Activated CD4-positive, alpha-beta memory T cell treated with anti-CD3 and anti-CD28 coated beads for 36 hours (primary cell): ENCODE measurements at regions of chr2 and their contacts with region 1.

Region 1: DNA sequence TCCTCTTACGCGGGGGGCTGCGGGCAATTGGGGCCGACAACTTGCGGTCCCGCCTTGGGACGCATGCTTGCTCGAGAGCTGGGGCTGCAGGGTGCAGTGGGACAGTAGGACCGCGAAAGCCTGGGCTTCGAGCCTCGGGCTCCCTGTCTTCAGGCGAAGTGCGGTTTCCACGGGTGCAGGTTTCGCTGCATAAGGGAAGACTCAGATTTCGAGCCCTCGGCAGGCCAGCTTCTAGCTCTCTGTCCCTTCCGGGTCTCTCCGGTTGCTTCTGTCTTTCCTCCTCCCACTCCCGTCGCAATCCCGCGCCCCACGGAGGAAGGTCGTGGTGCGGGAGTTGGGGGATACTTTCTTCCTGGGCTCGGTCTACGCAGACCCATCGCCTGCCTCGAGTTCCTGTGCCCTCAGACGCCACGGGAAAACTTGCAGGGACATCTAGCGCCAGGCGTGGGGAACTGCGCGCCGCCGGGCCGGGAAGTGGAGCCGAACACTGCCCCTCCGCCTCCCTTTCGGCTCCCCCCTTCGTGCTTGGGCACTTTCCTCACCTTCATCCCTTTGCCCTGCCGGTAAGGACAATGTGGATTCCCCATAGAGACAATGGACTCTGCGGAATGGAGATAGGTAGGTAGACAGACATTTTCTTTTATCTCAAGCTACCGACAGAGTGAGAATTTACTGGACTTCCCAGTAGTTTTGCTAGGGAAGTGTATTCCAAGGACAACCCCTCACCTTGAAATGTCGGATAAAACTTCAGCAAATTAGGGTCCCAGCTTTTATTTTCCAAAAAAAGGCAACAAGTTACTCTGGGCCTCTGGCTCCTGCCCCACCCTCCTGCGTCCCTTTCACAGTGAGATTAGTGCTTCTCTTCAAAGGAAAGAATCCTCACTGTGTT is 4.2 kb upstream of the HOXD13 start:
- DNase-seq: peak; percentile 46
- H3K4me3 Mint-ChIP-seq: peak overlapping the region; percentile 53
- H3K27ac Mint-ChIP-seq: no peak overlapping the region
- H3K4me1 Mint-ChIP-seq: peaks cover 12% of the 10 kb centered on the region
- H3K27me3 Mint-ChIP-seq: peaks cover 85% of the 10 kb centered on the region

Region 2: DNA sequence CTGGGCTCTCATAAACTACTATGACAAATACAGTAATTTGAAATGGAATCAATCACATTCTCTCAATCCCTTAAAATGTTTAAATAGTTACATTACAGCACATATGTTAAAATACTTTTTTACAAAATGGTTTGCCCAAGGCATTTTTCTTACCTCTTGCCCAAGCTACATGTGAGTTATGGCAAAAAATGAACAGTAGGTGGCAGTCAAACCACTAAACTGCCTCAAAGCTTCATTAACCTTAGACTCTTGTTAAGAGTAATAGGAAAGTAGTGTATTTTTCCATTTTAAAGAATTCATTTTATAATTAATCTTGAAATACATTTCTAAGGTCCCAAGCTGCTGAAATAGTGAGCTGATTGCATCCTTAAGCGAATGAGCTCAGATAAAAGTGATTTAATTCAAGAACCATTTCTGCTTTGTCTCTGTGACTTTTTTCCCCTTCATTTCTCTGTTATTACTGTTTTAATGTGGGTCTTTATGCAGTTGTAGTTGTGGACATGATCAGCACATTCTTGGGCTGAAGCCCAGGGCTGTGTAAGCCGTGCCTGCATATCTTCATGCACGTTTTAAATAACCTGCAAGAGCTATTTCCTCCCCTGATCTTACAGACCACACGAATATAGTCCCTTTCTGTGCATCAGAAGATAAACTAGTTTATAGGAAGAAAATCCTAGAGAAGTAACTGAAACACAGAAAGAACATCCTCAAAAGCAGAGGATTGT is 398.0 kb before region 1 on chr2:
- CTCF ChIA-PET with region 1: interaction called, 7 read pairs
- POLR2A ChIA-PET with region 1: no interaction called
- intact Hi-C with region 1: loop called (anchors 2 kb)
- DNase-seq: no peak
- H3K4me3 Mint-ChIP-seq: no peak overlapping the region
- H3K27ac Mint-ChIP-seq: no peak overlapping the region
- H3K4me1 Mint-ChIP-seq: no peaks in the 10 kb centered on the region
- H3K27me3 Mint-ChIP-seq: peaks cover 14% of the 10 kb centered on the region

Region 3: DNA sequence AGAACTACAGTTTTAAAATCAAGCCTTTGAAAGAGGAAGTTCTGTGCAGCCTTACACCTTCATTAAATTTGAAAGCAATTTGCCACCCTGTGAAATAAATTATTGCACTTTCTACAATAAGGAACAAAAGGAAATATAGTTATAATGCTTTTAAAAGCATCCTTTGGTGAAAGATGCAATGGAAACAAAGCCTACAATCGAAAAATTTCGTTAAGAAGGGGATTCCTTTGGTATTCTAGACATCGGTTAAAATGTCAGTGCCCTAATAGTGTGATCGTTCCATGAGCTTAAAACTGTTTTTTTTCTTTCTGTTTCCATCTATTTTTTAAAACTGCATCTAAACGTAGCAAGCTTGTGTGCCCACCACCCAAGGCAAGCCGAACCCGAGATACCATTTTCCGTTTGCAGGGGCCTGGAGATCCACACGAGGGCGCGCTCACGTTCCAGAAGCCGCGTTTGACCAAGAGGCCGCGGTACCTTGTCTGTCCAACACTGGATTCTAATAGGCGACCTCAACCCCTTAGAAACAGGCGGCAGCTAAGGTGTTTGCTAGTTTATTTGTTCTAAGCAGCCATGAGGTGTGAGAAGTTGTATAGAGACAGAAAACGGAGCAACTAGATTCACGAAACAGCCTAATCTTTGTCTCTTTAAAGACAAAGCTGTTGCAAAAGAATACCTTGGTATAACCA is 22.8 kb after region 1 on chr2:
- CTCF ChIA-PET with region 1: no interaction called
- POLR2A ChIA-PET with region 1: no interaction called
- intact Hi-C with region 1: loop called (anchors 2 kb)
- DNase-seq: peak; percentile 49
- H3K4me3 Mint-ChIP-seq: peak overlapping the region; percentile 8
- H3K27ac Mint-ChIP-seq: no peak overlapping the region
- H3K4me1 Mint-ChIP-seq: peaks cover 14% of the 10 kb centered on the region
- H3K27me3 Mint-ChIP-seq: peaks cover 80% of the 10 kb centered on the region

Region 4: DNA sequence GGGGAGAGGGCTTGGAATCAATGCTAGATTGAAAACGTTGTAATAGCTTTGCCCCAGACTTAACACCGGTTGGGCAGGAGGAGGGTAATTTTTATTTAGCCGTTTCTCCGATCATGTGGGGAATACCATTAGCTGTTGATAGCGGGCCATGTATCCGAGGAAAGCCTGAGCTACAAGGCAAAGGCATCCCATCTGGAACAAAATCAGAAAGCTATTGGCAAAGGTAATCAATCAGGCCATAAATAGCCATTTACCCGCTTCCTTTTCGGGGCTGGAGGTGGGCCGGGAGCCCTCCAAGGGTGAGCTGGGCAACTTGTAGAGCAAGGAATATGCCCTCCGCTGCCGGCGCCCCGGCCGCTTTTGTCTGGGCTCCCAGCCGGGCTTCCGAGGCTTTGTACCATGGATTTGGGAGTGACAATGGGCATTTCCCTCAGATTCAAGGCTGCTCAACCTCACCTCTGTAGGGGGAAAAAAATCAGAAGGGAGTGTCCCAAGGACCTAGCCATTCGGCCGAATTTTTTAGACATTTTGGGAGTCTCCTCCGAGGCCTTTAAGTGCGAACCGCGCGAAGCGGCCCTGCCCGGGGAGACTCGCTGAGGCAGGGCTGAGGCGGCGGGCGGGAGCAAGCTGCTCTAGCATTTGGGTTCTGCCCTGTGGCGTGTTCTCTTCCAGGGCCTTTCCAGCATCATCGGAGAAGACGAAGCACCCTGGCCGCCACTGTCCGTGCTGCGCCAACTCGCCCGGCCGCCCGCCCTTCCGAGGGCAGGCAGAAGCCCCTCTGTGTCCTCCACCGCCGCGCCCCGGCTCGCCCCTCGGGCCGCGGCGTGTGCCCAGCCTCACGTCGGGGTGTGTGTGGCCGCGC is 33.1 kb after region 1 on chr2:
- CTCF ChIA-PET with region 1: no interaction called
- POLR2A ChIA-PET with region 1: no interaction called
- intact Hi-C with region 1: no loop called
- DNase-seq: no peak
- H3K4me3 Mint-ChIP-seq: no peak overlapping the region
- H3K27ac Mint-ChIP-seq: no peak overlapping the region
- H3K4me1 Mint-ChIP-seq: peaks cover 10% of the 10 kb centered on the region
- H3K27me3 Mint-ChIP-seq: peaks cover 83% of the 10 kb centered on the region

Region 5: GRCh38 chr2:176161819-176162626 is 73.7 kb after region 1 on chr2:
- CTCF ChIA-PET with region 1: no interaction called
- POLR2A ChIA-PET with region 1: no interaction called
- intact Hi-C with region 1: loop called (anchors 5 kb)
- DNase-seq: no peak
- H3K4me3 Mint-ChIP-seq: no peak overlapping the region
- H3K27ac Mint-ChIP-seq: no peak overlapping the region
- H3K4me1 Mint-ChIP-seq: peaks cover 9% of the 10 kb centered on the region
- H3K27me3 Mint-ChIP-seq: peaks cover 78% of the 10 kb centered on the region

Region 6: GRCh38 chr2:176405477-176405876 is 317.2 kb after region 1 on chr2:
- CTCF ChIA-PET with region 1: no interaction called
- POLR2A ChIA-PET with region 1: no interaction called
- intact Hi-C with region 1: no loop called
- DNase-seq: no peak
- H3K4me3 Mint-ChIP-seq: no peak overlapping the region
- H3K27ac Mint-ChIP-seq: no peak overlapping the region
- H3K4me1 Mint-ChIP-seq: no peaks in the 10 kb centered on the region
- H3K27me3 Mint-ChIP-seq: peaks cover 4% of the 10 kb centered on the region